Spleen (tissue), 13 donors: ENCODE measurements at regions of chr9 and their contacts with region 1.

Region 1: DNA sequence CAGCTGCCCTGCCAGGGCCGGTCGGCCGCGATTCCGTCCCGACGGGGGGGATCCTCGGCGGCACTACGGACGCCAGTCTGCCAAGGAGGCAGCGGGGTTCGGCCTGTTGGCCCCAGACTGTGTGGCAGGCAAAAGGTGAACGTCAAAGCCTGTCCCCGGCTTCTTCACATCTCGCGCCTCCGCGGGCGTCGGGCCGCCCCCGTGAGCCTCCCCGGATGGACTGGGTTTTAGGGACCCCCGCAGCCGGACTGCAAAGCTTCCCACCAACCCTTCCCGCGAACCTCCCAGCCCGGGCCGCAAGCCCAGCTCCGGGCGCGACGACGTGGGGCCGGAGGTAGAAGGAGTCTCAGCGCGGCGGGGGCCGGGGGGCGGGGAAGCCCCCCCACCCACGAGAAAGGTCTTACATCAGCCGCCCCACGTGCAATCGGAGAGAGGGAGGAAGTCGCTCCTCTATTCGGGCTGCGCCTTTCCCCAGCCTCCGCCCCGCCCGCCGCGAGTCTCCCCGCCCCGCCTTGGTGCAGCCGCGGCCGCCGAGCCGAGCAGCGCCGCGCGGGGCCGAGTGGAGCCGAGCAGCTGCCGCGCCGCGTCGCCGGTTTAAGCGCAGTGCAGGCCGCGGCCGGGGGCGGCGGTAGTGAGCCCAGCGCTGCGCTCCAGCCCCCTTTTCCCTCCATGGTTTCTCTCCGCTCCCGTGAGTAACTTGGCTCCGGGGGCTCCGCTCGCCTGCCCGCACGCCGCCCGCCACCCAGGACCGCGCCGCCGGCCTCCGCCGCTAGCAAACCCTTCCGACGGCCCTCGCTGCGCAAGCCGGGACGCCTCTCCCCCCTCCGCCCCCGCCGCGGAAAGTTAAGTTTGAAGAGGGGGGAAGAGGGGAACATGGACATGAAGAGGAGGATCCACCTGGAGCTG is at the start of gene ANP32B:
- DNase-seq: peak; percentile 99
- H3K4me3 ChIP-seq: peak within 1 kb of the TSS; percentile 60 to 96 (median 94)
- H3K27ac ChIP-seq: peak within 1 kb of the TSS; percentile 96 to 100 (median 99)
- H3K4me1 ChIP-seq: peaks cover 20 to 47% (median 38%) of the 10 kb centered on the region in 6 donors
- H3K27me3 ChIP-seq: no peaks in the 10 kb centered on the region
- CTCF ChIP-seq: peak; percentile 40 to 98 (median 94)
- POLR2A ChIP-seq: peak in 1 of 3 donors; percentile 9
- total RNA-seq, gene ANP32B: 39.1 to 120 (median 98.3) TPM

Region 2: DNA sequence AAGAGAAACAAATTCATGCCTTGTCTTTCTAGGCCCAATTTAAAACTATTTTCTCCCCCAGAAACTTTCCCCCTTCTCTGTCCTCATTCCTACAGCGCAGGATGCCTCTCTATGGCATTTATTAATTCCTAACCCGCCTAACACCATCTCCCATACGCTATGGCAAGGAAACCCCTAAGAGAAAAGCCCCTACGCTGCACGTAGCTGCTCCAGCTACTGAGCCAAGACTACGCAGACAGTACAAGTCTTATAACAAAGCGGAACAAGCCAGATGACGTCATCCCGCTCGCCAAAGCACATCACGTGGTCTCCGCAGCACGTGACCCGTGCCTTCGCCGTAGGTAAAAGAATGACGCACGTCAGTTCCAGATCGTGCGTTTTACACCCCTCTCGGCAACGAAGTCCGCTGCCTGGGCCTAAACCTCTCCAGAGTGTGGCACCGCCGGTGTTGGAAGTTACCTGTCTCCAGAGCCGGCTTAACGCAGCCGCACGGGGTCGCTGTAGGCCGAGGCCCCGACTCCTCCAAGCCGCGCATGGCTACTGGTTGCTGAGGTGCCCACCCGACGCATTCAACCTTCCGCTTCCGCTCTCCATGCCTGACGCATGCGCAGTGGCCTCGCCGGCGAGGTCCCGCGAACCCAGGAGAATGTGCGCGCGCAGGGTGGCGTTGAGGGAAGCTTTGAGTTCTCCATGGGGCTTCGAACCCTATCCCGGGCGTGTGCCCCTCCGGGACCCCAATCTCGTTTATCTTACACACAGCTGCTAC is 60.8 kb before region 1 on chr9 and contains the start of gene TRMO:
- intact Hi-C with region 1: loop called (anchors 10 kb)
- DNase-seq: peak; percentile 99
- H3K4me3 ChIP-seq: peak within 1 kb of the TSS; percentile 42 to 78 (median 56)
- H3K27ac ChIP-seq: peak within 1 kb of the TSS; percentile 96 to 100 (median 99)
- H3K4me1 ChIP-seq: peaks cover 32 to 72% (median 57%) of the 10 kb centered on the region in 6 donors
- H3K27me3 ChIP-seq: no peaks in the 10 kb centered on the region
- CTCF ChIP-seq: peak; percentile 42 to 82 (median 62)
- POLR2A ChIP-seq: peak; percentile 85 to 96 (median 89)
- total RNA-seq, gene TRMO: 16.8 to 58.6 (median 28.3) TPM

Region 3: GRCh38 chr9:98034593-98035546 is 51.9 kb after region 1 on chr9:
- intact Hi-C with region 1: loop called (anchors 10 kb)
- DNase-seq: peak; percentile 94
- H3K4me3 ChIP-seq: peak overlapping the region in 1 of 8 donors; percentile 44
- H3K27ac ChIP-seq: peak overlapping the region in 5 of 8 donors; percentile 3 to 73 (median 56)
- H3K4me1 ChIP-seq: peaks cover 7 to 56% (median 41%) of the 10 kb centered on the region in 6 donors
- H3K27me3 ChIP-seq: no peaks in the 10 kb centered on the region
- CTCF ChIP-seq: peak; percentile 61 to 94 (median 86)
- POLR2A ChIP-seq: no peak

Region 4: GRCh38 chr9:98255578-98256296 is 272.8 kb after region 1 on chr9 and contains the start of gene TBC1D2:
- intact Hi-C with region 1: loop called (anchors 5 kb)
- DNase-seq: peak; percentile 99
- H3K4me3 ChIP-seq: peak within 1 kb of the TSS; percentile 74 to 95 (median 89)
- H3K27ac ChIP-seq: peak within 1 kb of the TSS; percentile 97 to 99 (median 99)
- H3K4me1 ChIP-seq: peaks cover 0 to 62% (median 36%) of the 10 kb centered on the region in 6 donors
- H3K27me3 ChIP-seq: no peaks in the 10 kb centered on the region
- CTCF ChIP-seq: peak in 5 of 11 experiments; percentile 26 to 52 (median 34)
- POLR2A ChIP-seq: peak in 2 of 3 donors; percentile 46 to 71
- total RNA-seq, gene TBC1D2: 10.7 to 27.2 (median 13.0) TPM

Region 5: DNA sequence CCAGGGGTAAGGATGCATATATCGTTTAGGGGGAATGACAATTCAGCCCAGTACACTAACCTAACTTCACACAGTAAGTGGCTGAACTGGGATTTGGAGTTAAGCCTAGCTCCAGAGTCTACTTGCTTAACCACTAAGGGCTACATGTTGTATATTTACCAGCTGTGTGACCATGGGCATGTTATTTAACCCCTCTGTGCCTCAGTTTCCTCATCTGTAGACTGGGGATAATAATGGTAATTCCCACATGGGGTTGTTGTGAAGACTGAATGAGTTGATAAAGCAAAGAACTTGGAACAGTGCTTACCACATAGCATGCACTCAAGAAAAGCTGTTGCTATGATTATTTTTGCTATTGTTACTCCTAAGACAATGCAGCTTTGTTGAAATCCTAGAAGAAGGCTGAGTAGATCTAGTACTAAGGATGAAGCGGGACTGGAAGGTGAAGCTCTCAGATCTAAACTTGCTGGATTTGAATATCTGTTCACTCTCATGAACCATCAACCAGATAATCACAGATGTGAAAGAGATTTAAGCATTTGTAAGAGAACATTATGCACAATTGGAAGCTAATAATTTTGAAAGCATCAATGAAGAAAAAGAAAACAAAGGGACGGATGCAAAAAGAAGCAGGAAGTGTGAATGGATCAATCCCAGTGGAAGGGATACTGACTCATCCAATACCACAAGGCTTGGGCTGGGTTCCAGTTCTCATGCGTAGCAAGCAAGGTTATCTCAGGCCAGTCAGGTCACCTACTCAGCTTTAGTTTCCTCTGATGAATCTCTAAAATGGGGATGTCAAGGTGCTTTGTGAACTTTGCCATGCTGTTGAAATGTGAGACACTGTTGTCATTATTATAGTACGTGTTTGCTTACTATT is 351.0 kb after region 1 on chr9:
- intact Hi-C with region 1: no loop called
- DNase-seq: no peak
- H3K4me3 ChIP-seq: no peak overlapping the region
- H3K27ac ChIP-seq: no peak overlapping the region
- H3K4me1 ChIP-seq: peaks cover 0 to 13% (median 6%) of the 10 kb centered on the region in 6 donors
- H3K27me3 ChIP-seq: peaks cover 0 to 43% (median 0%) of the 10 kb centered on the region in 7 donors
- CTCF ChIP-seq: no peak
- POLR2A ChIP-seq: no peak